Common myeloid progenitor, CD34-positive (primary cell): ENCODE measurements at regions of chrX and their contacts with region 1.

Region 1: GRCh38 chrX:17082831-17083230 is 136.4 kb downstream of the REPS2 start:
- DNase-seq: peak; percentile 29 to 67 (median 53)
- H3K4me3 ChIP-seq: no peak overlapping the region
- H3K27ac ChIP-seq: no peak overlapping the region
- H3K4me1 ChIP-seq: no peaks in the 10 kb centered on the region
- H3K27me3 ChIP-seq: peaks cover 0 to 13% (median 0%) of the 10 kb centered on the region in 5 experiments

Region 2: GRCh38 chrX:16882702-16883486 is 199.9 kb before region 1 on chrX:
- CTCF ChIA-PET with region 1: interaction called, 14 read pairs
- POLR2A ChIA-PET with region 1: no interaction called
- DNase-seq: peak; percentile 72 to 87 (median 83)
- H3K4me3 ChIP-seq: peak overlapping the region; percentile 39 to 86 (median 60)
- H3K27ac ChIP-seq: peak overlapping the region; percentile 35 to 59
- H3K4me1 ChIP-seq: peaks cover 0 to 9% (median 3%) of the 10 kb centered on the region in 4 experiments
- H3K27me3 ChIP-seq: peaks cover 0 to 41% (median 0%) of the 10 kb centered on the region in 5 experiments

Region 3: DNA sequence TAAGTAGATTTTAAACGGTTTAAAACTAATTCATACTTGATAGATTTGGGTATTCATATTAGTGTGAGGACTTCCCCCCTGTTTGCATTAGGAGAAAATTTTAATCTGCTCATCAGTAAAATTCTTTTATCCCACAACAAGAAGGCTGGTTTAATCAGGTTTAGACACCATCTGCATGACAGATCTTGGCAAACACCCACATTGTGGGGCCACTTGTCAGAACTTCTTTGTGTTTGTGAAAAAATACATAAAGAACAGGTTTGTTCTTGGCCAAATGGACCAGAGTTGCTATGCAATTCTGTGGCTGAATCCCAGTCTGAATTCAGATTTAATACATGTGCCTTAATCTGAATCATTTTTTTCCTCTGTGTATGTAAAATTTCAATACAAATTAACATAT is 15.3 kb before region 1 on chrX:
- CTCF ChIA-PET with region 1: no interaction called
- POLR2A ChIA-PET with region 1: no interaction called
- DNase-seq: no peak
- H3K4me3 ChIP-seq: no peak overlapping the region
- H3K27ac ChIP-seq: no peak overlapping the region
- H3K4me1 ChIP-seq: no peaks in the 10 kb centered on the region
- H3K27me3 ChIP-seq: peaks cover 0 to 2% (median 0%) of the 10 kb centered on the region in 5 experiments